ENCODE measurements at regions of chr7 and their contacts with region 1.

Region 1: GRCh38 chr7:47763063-47763974 is 181.4 kb upstream of the TNS3 start:
- DNase-seq: peak; percentile 82 to 100
- H3K4me3 ChIP-seq: peak overlapping the region; percentile 5; the same call in 1 of the 2 replicates
- H3K27ac ChIP-seq: peak overlapping the region; percentile 95
- H3K4me1 ChIP-seq: peaks cover 69% of the 10 kb centered on the region
- H3K27me3 ChIP-seq: no peaks in the 10 kb centered on the region
- CTCF ChIP-seq: no peak

Region 2: DNA sequence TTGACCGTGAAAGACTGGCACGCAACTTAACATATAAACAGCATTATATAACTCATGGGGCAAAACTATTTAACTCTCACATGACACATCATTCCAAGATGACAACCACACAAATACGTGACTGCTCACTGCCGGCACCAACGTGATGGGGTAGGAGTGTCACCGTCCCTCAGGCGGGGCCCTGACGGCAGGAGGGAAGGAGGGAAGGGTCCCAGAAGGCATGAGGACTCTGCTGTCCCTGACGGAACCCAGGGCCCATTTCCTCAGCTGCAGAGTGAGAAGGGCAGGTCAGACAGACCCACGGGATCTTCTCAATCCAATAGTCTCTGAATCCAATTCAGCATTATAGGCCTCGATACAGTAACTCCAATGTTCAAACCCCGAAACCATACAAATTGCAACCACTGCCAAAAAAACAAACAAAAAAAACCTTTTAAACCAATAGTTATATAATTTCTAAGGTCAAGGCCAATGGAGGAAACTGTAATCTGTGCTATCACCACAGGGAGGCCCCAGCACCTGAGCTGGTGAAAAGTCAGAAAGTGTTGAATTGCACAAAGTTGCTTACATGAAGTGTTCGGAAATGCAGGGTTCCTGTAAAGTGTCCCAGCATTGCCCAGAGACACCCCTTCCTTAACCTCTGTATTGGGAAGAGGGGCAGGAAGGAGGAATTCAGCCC is 318.8 kb before region 1 on chr7:
- CTCF ChIA-PET with region 1: no interaction called
- POLR2A ChIA-PET with region 1: no interaction called
- intact Hi-C with region 1: loop called (anchors 2 kb)
- DNase-seq: no peak
- H3K4me3 ChIP-seq: no peak overlapping the region
- H3K27ac ChIP-seq: no peak overlapping the region
- H3K4me1 ChIP-seq: peaks cover 91% of the 10 kb centered on the region
- H3K27me3 ChIP-seq: no peaks in the 10 kb centered on the region
- CTCF ChIP-seq: peak; percentile 60

Region 3: GRCh38 chr7:47605816-47606575 is 157.3 kb before region 1 on chr7:
- CTCF ChIA-PET with region 1: no interaction called
- POLR2A ChIA-PET with region 1: no interaction called
- intact Hi-C with region 1: loop called (anchors 1 kb)
- DNase-seq: no peak
- H3K4me3 ChIP-seq: no peak overlapping the region
- H3K27ac ChIP-seq: peak overlapping the region; percentile 98
- H3K4me1 ChIP-seq: peaks cover 77% of the 10 kb centered on the region
- H3K27me3 ChIP-seq: no peaks in the 10 kb centered on the region
- CTCF ChIP-seq: no peak

Region 4: GRCh38 chr7:47614450-47614849 is 148.9 kb before region 1 on chr7:
- CTCF ChIA-PET with region 1: no interaction called
- POLR2A ChIA-PET with region 1: interaction called, 15 read pairs
- intact Hi-C with region 1: no loop called
- DNase-seq: no peak
- H3K4me3 ChIP-seq: no peak overlapping the region
- H3K27ac ChIP-seq: no peak overlapping the region
- H3K4me1 ChIP-seq: peaks cover 12% of the 10 kb centered on the region
- H3K27me3 ChIP-seq: no peaks in the 10 kb centered on the region
- CTCF ChIP-seq: no peak

Region 5: DNA sequence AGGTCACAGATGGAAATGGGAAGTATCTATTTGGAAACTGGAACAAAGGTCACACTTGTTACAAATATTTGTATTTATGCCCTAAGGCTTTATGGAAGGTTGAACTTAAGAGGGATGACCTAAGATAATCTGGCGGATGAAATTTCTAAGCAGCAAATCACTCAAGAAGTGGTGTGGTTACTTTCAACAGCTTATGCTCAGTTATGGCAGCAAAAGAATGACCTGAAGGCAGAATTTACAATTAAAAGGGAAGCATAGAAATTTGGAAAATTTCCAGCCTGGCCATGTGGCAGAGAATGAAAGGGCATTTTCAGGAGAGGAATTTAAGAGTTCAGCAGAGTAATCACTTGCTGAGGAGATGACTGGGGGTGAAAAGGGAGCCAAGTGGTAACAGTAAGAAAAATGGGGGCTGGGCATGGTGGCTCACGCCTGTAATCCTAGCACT is 85.6 kb before region 1 on chr7:
- CTCF ChIA-PET with region 1: no interaction called
- POLR2A ChIA-PET with region 1: no interaction called
- intact Hi-C with region 1: loop called (anchors 1 kb)
- DNase-seq: peak; percentile 28 to 99
- H3K4me3 ChIP-seq: no peak overlapping the region
- H3K27ac ChIP-seq: peak overlapping the region; percentile 88
- H3K4me1 ChIP-seq: peaks cover 58% of the 10 kb centered on the region
- H3K27me3 ChIP-seq: no peaks in the 10 kb centered on the region
- CTCF ChIP-seq: no peak

Region 6: GRCh38 chr7:47690902-47691558 is 72.3 kb before region 1 on chr7:
- CTCF ChIA-PET with region 1: no interaction called
- POLR2A ChIA-PET with region 1: interaction called, 10 read pairs
- intact Hi-C with region 1: loop called (anchors 1 kb)
- DNase-seq: peak; percentile 23 to 65
- H3K4me3 ChIP-seq: no peak overlapping the region
- H3K27ac ChIP-seq: peak overlapping the region; percentile 78
- H3K4me1 ChIP-seq: peaks cover 51% of the 10 kb centered on the region
- H3K27me3 ChIP-seq: no peaks in the 10 kb centered on the region
- CTCF ChIP-seq: no peak

Region 7: DNA sequence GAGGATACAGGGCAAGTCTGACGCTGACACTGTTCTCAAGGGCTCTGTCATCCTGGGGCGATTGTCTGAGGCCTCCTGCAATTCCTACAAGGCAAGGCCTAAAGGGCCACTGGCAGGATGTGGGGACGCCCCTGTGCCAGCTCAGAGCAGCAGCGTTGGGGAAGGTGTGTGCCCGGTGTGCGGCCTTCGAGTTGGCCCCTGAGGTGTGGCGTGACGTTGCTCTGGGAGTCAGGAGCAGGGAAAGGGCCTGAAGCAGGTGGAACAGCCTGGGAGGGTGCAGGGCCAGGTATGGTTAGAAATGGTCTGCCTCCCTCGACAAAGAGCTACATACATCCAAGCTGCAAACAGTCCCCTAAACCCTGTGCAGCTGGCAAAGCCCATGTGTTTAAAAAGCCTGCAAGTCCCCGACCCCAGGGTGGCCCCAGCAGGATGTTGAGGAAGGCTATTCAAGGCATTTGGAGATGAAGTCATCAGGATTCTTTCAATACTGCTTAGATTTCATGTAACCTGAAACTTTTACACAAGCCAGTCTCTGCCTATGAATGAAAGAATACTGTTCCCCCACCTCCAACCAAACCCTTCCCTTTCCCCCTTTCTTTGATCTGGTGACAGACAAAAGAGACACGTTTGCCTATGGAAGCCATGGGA is 38.9 kb before region 1 on chr7:
- CTCF ChIA-PET with region 1: no interaction called
- POLR2A ChIA-PET with region 1: interaction called, 10 read pairs
- intact Hi-C with region 1: loop called (anchors 1 kb)
- DNase-seq: peak; percentile 67 to 90
- H3K4me3 ChIP-seq: peak overlapping the region; percentile 16; the same call in 1 of the 2 replicates
- H3K27ac ChIP-seq: peak overlapping the region; percentile 94
- H3K4me1 ChIP-seq: peaks cover 30% of the 10 kb centered on the region
- H3K27me3 ChIP-seq: no peaks in the 10 kb centered on the region
- CTCF ChIP-seq: no peak

Measured in PC-9 (cell line).